Activated naive CD4-positive, alpha-beta T cell treated with anti-CD3 and anti-CD28 coated beads, Interleukin-2, amount 10 ng/mL, durations not matched to agents 7 days and 5 days (primary cell): ENCODE measurements at regions of chr17 and their contacts with region 1.

Region 1: DNA sequence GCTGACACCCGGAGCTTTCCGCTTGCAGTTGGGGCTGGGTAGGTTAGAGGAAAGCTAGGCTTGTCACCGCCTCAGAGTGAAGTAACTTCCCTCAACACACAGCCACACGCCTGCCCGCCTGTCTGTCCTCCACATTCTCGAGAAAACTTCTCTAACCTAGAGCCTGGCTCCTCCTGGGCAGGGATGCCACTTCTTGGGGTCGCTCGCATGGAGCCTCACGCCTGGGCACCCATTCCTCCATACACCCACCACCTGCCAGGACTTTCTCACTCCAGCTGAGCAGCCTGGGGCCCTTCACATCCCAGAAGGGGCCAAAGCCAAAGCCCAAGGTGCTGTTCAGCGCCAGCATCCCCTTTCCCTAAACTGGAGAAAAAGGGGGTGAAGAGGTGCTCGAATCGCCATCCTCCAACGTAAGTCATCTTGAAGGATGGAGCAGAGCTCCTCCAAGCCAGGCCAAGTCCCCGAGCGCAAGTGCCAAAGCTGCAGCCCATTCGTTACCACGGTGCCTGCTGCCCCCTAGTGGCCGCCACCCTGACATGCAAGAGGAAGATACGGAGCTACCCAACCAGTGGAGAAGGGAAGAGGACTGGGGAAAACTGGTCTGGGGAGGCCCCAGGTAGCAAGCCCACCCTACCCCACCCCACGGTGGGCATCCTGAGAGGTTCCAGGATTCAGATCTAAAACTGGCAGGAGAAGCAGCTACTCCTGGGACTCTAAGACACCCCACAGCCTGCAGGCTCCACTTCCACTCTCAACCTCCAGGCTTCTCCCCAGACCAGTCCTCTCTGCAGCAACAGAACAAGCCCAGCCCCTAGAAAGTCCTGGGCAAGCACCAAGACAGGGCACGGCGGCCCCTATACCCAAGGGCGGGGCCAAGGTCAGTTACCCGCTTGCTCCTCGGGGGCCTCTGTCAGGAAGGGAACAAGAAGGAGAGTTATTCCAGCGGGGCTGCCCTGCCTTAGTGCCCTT is 63.1 kb downstream of the MYO18A start:
- DNase-seq: peak; percentile 84
- H3K4me3 Mint-ChIP-seq: no peak overlapping the region
- H3K27ac Mint-ChIP-seq: no peak overlapping the region
- H3K4me1 Mint-ChIP-seq: peaks cover 7% of the 10 kb centered on the region
- H3K27me3 Mint-ChIP-seq: no peaks in the 10 kb centered on the region

Region 2: DNA sequence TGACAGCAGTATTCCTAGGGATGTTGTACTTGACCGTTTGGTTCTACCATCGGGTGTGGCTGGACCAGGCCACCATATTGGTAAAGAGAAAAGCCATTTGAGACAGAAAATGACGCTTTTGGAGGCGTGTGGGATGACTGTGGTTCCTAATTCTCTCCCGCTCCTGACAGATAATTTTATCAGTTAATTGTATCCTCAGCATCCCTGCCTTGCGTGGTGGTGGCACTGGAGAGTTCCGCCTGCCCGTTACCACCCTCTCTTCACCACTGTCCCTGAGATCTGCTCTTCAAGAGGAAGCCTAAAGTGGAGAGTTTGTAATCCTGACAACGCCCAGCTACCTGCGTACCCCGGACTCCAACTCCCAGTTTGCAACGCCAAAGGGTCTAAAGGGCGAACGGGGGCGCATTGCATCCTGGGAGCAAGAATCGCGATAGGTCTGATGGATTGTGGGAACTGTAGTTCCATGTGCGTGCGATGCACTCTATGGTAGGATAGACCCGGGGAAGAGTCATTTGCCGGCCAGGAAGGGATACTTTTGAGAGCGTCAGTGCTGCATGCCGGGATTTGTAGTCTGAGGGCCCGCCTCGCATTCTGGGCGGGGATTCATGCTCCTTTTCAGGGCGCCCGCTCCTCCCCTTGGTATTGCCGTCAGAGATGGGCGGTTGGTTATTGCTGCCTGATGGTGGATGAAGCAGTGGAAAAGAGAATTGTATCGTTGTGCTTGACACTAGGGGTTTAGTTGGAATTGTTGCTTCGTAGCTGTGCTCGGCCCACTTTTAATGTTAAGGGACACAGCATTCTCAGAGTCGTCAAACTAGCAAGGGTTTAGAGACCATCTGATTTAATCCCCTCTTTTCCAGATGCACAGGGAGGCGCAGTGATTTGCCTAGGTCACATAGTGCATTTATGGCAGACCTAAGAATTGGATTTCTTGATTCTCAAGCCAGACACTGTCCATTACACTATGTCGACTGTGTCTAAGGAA is 164.8 kb before region 1 on chr17:
- CTCF ChIA-PET with region 1: interaction called, 19 read pairs
- DNase-seq: peak; percentile 98
- H3K4me3 Mint-ChIP-seq: no peak overlapping the region
- H3K27ac Mint-ChIP-seq: no peak overlapping the region
- H3K4me1 Mint-ChIP-seq: peaks cover 18% of the 10 kb centered on the region
- H3K27me3 Mint-ChIP-seq: peaks cover 3% of the 10 kb centered on the region

Region 3: GRCh38 chr17:28973425-28973824 is 143.7 kb before region 1 on chr17:
- CTCF ChIA-PET with region 1: interaction called, 27 read pairs
- DNase-seq: no peak
- H3K4me3 Mint-ChIP-seq: no peak overlapping the region
- H3K27ac Mint-ChIP-seq: no peak overlapping the region
- H3K4me1 Mint-ChIP-seq: no peaks in the 10 kb centered on the region
- H3K27me3 Mint-ChIP-seq: peaks cover 55% of the 10 kb centered on the region

Region 4: DNA sequence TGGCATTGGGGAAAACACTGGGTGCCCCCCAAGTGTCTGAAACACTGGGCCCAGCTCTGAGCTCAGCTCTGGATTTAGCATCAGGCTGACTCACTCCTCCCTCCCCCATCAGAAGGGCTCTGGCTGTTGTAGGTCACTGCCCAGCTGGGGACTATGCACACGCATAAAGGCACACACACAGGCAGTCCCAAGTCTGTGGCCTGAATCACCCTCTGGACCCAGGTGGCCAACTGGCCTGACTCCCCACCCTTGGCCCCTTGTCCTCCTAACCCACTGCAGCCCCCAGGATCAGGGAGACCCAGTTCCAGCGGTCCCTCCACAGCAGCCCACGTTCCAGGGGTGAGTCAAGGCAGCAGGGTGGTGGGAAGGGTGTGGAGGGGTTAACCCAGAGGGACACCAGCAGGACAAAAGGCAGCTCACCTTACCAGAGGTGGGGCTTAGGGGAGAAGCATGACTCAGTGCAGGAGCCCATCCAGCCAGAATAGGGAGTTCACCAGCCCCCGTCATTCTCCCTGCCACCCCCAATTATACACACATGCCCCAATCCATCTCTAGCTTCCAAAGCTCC is 16.1 kb after region 1 on chr17:
- CTCF ChIA-PET with region 1: interaction called, 482 read pairs
- DNase-seq: no peak
- H3K4me3 Mint-ChIP-seq: no peak overlapping the region
- H3K27ac Mint-ChIP-seq: no peak overlapping the region
- H3K4me1 Mint-ChIP-seq: peaks cover 50% of the 10 kb centered on the region
- H3K27me3 Mint-ChIP-seq: no peaks in the 10 kb centered on the region